Left colon (tissue), 2 donors: ENCODE measurements at regions of chrX and their contacts with region 1.

Region 1: DNA sequence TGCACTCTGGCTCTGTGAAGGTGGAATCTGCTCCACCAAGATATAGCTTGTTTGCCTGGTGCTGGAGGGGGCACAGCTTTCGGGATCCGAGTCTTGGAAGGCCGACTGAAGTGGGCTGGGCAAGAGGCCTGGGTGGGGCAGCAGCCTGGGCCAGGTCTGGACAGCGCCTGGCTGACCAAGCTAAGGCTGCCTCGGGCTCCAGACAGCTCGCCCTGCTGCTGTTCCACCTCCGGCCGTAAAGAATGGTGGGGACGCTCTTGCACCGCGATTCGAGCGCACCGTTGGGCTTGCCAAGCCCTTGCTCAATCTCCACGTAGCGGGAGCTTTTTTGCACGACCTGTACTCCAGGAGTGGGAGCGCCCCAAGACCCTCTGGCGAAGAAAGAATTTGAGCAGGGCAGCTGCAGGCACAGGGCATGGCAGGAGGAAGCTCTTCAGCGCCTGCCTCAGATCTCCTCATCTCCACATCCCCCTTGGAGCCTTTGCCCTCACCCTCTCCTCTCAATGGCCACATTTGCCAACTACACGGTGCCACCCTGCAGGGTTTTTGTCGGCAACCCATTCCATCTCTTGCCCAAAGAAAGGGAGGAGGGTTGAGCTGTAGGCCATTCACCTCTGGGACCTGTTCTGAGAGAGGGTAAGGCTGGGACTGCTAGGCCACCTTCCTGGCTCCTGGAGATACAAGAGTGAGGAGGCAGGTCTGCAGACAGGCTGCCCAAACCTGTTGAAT is 18.9 kb downstream of the CNGA2 start:
- DNase-seq: peak; percentile 26 to 46
- ATAC-seq: peak; percentile 82

Region 2: DNA sequence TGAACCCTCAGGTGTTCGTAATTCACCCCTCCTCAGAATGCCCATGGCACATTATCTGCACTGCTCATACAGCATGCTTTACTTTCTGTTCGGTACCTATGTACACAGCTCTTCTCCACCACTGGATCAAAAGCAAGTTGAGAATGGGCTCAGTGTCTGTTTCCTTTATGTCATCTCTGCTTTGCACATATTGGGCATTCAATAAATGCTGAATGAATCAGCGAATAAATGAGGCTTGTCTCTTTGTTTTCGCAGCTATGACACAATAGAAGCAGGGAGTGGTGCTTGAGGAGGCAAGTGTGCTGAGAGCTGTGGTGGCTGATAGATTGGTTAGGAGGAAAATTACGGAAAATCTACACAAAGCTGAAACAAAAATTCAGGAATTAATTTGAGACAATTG is 465.5 kb before region 1 on chrX:
- intact Hi-C with region 1: no loop called
- DNase-seq: no peak
- ATAC-seq: no peak

Region 3: GRCh38 chrX:152632445-152633097 is 879.1 kb after region 1 on chrX:
- intact Hi-C with region 1: loop called in 1 of 2 experiments (anchors 5 kb)
- DNase-seq: peak in 1 of 2 donors; percentile 57
- ATAC-seq: no peak